Heart left ventricle (tissue), 16 donors: ENCODE measurements at regions of chr3 and their contacts with region 1.

Region 1: DNA sequence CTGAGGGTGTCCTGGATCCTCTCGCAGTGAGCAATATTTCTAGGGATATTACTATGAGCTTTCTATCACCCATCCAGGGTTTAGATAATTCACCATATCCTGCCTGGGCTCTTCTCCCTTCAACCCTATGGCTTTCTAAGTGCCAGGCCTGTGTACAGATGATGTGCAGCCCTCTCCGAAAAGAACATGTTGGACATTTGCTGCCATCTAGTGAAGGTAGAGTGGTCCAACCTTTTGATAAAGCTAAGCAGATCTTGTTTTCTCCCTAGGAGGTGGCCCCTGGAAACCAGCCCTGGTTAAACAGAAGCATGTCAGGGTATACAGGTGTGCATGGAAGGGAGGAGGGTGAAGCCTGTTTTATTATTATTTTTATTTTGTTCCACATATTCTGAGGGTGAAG is 27.9 kb upstream of the SCN10A start:
- DNase-seq: peak in 2 of 5 donors; percentile 16 to 26
- ATAC-seq: peak in 3 of 4 donors; percentile 85 to 94 (median 93)
- H3K4me3 ChIP-seq: no peak overlapping the region
- H3K27ac ChIP-seq: no peak overlapping the region
- H3K4me1 ChIP-seq: no peaks in the 10 kb centered on the region
- H3K27me3 ChIP-seq: no peaks in the 10 kb centered on the region
- CTCF ChIP-seq: peak; percentile 18 to 60 (median 53)
- POLR2A ChIP-seq: no peak

Region 2: DNA sequence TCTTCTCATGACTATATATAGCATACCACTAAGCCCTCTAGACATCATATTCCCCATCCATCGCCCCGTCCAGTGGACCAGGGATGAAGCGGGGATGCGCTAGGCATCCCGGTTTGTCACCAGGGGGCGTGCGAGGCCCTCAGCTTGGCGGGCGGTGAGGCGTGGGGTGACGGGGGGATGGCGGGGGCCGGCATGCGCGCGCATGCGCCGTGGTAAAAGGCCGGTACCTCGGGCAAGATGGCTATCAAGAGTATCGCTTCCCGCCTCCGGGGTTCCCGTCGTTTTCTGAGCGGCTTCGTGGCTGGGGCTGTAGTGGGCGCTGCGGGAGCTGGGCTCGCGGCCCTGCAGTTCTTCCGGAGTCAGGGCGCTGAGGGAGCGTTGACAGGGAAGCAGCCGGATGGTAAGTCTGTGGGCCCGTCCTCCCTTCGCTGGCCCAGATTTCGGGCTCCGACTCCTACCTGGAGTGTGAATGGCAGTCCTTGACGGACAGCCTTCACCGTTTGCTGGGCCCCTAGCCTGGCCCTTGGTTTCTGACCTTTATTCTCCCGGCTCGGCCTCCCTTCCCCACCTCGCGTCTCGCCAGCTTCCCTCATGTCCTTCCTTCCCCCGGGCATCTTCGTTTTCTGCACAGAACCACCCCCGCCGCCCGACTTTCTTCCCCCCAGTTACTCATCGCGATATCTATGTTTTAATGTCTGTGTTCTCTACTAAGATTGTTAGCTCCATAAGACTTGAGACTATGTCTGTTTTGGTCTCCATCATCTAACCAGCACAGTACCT is 347.6 kb before region 1 on chr3 and contains the start of gene EXOG:
- intact Hi-C with region 1: loop called in 5 of 10 experiments (anchors 5 to 10 kb)
- DNase-seq: peak; percentile 95 to 98 (median 96)
- ATAC-seq: peak; percentile 79 to 94 (median 92)
- H3K4me3 ChIP-seq: peak within 1 kb of the TSS; percentile 58 to 97 (median 70)
- H3K27ac ChIP-seq: peak within 1 kb of the TSS; percentile 53 to 92 (median 86)
- H3K4me1 ChIP-seq: peaks cover 0 to 33% (median 11%) of the 10 kb centered on the region in 12 donors
- H3K27me3 ChIP-seq: no peaks in the 10 kb centered on the region
- CTCF ChIP-seq: peak; percentile 88 to 98 (median 92)
- POLR2A ChIP-seq: peak in 1 of 2 donors; percentile 46
- total RNA-seq, gene EXOG: 18.3 to 35.6 (median 25.0) TPM

Region 3: GRCh38 chr3:38574411-38575278 is 269.3 kb before region 1 on chr3:
- intact Hi-C with region 1: no loop called
- DNase-seq: peak in 2 of 5 donors; percentile 6 to 17
- ATAC-seq: peak in 1 of 4 donors; percentile 13
- H3K4me3 ChIP-seq: no peak overlapping the region
- H3K27ac ChIP-seq: peak overlapping the region in 7 of 12 donors; percentile 6 to 69 (median 39)
- H3K4me1 ChIP-seq: peaks cover 0 to 51% (median 22%) of the 10 kb centered on the region in 12 donors
- H3K27me3 ChIP-seq: no peaks in the 10 kb centered on the region
- CTCF ChIP-seq: no peak
- POLR2A ChIP-seq: no peak

Region 4: DNA sequence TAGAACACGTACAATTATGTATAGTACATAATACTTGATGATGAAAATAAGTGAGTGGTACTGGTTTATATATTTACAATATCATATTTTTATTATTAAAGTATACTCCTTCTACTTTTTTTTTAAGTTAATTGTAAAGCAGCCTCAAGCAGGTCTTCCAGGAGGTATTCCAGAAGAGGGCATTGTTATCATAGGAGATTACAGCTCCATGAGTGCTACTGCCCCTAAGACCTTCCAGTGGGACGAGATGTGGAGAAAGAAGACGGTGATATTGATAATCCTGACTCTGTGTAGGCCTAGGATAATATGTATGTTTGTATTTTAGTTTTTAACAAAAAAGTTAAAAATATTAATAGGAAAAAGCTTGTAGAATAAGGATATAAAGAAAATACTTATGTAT is 154.1 kb before region 1 on chr3:
- intact Hi-C with region 1: loop called in 9 of 10 experiments (anchors 1 to 10 kb)
- DNase-seq: no peak
- ATAC-seq: peak in 2 of 4 donors; percentile 50 to 52
- H3K4me3 ChIP-seq: no peak overlapping the region
- H3K27ac ChIP-seq: no peak overlapping the region
- H3K4me1 ChIP-seq: no peaks in the 10 kb centered on the region
- H3K27me3 ChIP-seq: no peaks in the 10 kb centered on the region
- CTCF ChIP-seq: peak in 8 of 12 donors; percentile 5 to 35 (median 28)
- POLR2A ChIP-seq: no peak

Region 5: GRCh38 chr3:38738630-38739395 is 105.1 kb before region 1 on chr3:
- intact Hi-C with region 1: loop called in 5 of 10 experiments (anchors 5 to 10 kb)
- DNase-seq: no peak
- ATAC-seq: peak in 2 of 4 donors; percentile 42
- H3K4me3 ChIP-seq: no peak overlapping the region
- H3K27ac ChIP-seq: no peak overlapping the region
- H3K4me1 ChIP-seq: no peaks in the 10 kb centered on the region
- H3K27me3 ChIP-seq: no peaks in the 10 kb centered on the region
- CTCF ChIP-seq: peak; percentile 21 to 60 (median 38)
- POLR2A ChIP-seq: no peak

Region 6: GRCh38 chr3:38782148-38782547 is 61.8 kb before region 1 on chr3:
- intact Hi-C with region 1: no loop called
- DNase-seq: no peak
- ATAC-seq: no peak
- H3K4me3 ChIP-seq: no peak overlapping the region
- H3K27ac ChIP-seq: no peak overlapping the region
- H3K4me1 ChIP-seq: no peaks in the 10 kb centered on the region
- H3K27me3 ChIP-seq: no peaks in the 10 kb centered on the region
- CTCF ChIP-seq: no peak
- POLR2A ChIP-seq: no peak

Region 7: DNA sequence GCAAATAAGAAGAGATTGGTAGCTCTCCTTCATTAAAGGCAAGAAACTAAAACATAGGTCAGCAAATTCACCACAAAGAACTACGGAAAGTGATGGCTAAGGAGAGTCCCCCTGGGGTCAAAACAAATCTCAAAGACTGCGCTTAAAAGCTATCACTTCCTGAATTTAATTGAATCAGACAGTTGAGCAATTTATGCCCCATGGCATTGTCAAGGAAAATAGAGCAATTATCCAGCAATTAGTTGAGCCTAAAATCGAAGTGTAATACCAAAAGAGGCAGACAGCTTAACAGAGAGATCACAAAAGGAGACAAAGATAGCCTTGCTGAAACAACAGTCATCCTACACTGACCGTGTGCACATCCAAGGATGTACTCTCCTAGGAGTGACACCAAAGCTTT is 46.5 kb after region 1 on chr3:
- intact Hi-C with region 1: no loop called
- DNase-seq: no peak
- ATAC-seq: no peak
- H3K4me3 ChIP-seq: no peak overlapping the region
- H3K27ac ChIP-seq: no peak overlapping the region
- H3K4me1 ChIP-seq: no peaks in the 10 kb centered on the region
- H3K27me3 ChIP-seq: no peaks in the 10 kb centered on the region
- CTCF ChIP-seq: no peak
- POLR2A ChIP-seq: no peak